ENCODE measurements at regions of chr18 and their contacts with region 1.

Region 1: GRCh38 chr18:51211552-51211951 is 14.1 kb upstream of the MEX3C start:
- DNase-seq: peak; percentile 64 to 65
- ATAC-seq: peak; percentile 86 to 96 (median 96)
- H3K4me3 ChIP-seq: no peak overlapping the region
- H3K4me3 Mint-ChIP-seq: peak overlapping the region; percentile 70
- H3K27ac ChIP-seq: peak overlapping the region; percentile 93
- H3K27ac Mint-ChIP-seq: peak overlapping the region; percentile 81 to 85
- H3K4me1 ChIP-seq: peaks cover 20% of the 10 kb centered on the region
- H3K4me1 Mint-ChIP-seq: peaks cover 41 to 42% of the 10 kb centered on the region in 2 donors
- H3K27me3 ChIP-seq: no peaks in the 10 kb centered on the region
- H3K27me3 Mint-ChIP-seq: no peaks in the 10 kb centered on the region
- CTCF ChIP-seq: no peak

Region 2: DNA sequence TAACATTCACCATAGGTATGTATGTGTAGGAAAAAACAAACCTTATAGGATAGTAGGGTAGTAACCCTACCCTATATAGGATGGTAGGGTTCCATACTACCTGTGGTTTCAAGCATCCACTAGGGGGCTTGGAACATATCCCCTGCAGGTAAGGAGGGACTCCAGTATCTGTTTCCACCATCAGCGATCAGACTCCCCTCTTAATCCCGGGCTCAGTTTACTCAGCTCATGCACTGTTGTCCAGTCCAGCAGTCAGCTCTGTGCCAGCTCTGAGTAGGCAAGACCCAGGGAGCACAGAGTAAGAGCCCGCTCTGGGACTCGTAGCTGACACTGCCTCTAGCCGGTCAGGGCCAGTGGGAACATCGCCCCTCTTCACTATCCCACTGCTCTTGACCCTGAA is 75.8 kb before region 1 on chr18:
- intact Hi-C with region 1: no loop called
- DNase-seq: peak in 1 of 2 donors; percentile 51
- ATAC-seq: peak in 1 of 3 donors; percentile 52
- H3K4me3 ChIP-seq: no peak overlapping the region
- H3K4me3 Mint-ChIP-seq: no peak overlapping the region
- H3K27ac ChIP-seq: no peak overlapping the region
- H3K27ac Mint-ChIP-seq: no peak overlapping the region
- H3K4me1 ChIP-seq: peaks cover 4% of the 10 kb centered on the region
- H3K4me1 Mint-ChIP-seq: peaks cover 13 to 22% of the 10 kb centered on the region in 2 donors
- H3K27me3 ChIP-seq: no peaks in the 10 kb centered on the region
- H3K27me3 Mint-ChIP-seq: no peaks in the 10 kb centered on the region
- CTCF ChIP-seq: peak; percentile 33

Region 3: DNA sequence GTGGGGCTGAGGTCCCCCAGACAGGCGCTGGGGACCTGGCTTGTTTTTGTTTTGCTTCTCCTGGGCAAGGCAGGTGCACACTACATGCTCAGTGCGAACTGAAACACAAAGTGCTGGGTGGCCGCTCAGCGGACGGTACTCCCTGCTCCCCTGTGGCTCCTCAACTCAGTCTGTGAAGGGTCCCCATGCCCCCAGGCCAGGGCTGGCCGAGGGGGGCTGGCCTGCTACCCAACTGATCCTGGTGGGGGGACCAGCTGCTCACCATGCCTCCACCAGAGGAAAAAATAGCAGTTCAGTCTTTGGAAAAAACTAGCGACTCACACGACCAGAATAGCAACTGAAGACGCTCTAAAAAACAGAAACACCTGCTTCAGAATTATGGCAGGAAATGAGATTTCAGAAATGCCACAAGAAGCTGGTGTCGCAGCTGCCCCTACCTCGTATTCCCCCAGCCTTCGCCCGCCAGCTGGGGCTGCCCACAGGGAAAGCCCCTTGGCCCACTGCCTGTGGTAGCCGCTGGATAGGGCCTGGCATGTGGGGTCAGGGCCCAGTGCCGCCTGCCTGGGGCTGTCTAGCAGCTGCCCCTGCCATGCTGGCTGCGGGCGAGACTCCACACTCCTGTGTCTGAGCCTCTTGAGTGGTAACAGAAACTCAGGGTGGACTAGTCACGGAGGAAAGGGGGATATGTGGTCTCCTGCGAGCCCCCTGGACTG is 57.7 kb before region 1 on chr18:
- intact Hi-C with region 1: loop called (anchors 1 kb)
- DNase-seq: peak; percentile 73 to 74
- ATAC-seq: peak; percentile 63 to 80 (median 75)
- H3K4me3 ChIP-seq: peak overlapping the region; percentile 33
- H3K4me3 Mint-ChIP-seq: peak overlapping the region; percentile 81
- H3K27ac ChIP-seq: peak overlapping the region; percentile 92
- H3K27ac Mint-ChIP-seq: peak overlapping the region; percentile 97 to 99
- H3K4me1 ChIP-seq: peaks cover 59% of the 10 kb centered on the region
- H3K4me1 Mint-ChIP-seq: peaks cover 51 to 55% of the 10 kb centered on the region in 2 donors
- H3K27me3 ChIP-seq: no peaks in the 10 kb centered on the region
- H3K27me3 Mint-ChIP-seq: no peaks in the 10 kb centered on the region
- CTCF ChIP-seq: no peak

Region 4: GRCh38 chr18:51197661-51198424 is 13.7 kb before region 1 on chr18 and contains the start of gene MEX3C:
- intact Hi-C with region 1: loop called (anchors 1 kb)
- DNase-seq: peak; percentile 99 to 100
- ATAC-seq: peak; percentile 79 to 93 (median 79)
- H3K4me3 ChIP-seq: peak within 1 kb of the TSS; percentile 76
- H3K4me3 Mint-ChIP-seq: peak within 1 kb of the TSS; percentile 97
- H3K27ac ChIP-seq: peak within 1 kb of the TSS; percentile 91
- H3K27ac Mint-ChIP-seq: peak within 1 kb of the TSS; percentile 93 to 97
- H3K4me1 ChIP-seq: peaks cover 17% of the 10 kb centered on the region
- H3K4me1 Mint-ChIP-seq: peaks cover 61 to 63% of the 10 kb centered on the region in 2 donors
- H3K27me3 ChIP-seq: no peaks in the 10 kb centered on the region
- H3K27me3 Mint-ChIP-seq: no peaks in the 10 kb centered on the region
- CTCF ChIP-seq: no peak
- total RNA-seq, gene MEX3C: 189 to 205 (median 202) TPM

Region 5: DNA sequence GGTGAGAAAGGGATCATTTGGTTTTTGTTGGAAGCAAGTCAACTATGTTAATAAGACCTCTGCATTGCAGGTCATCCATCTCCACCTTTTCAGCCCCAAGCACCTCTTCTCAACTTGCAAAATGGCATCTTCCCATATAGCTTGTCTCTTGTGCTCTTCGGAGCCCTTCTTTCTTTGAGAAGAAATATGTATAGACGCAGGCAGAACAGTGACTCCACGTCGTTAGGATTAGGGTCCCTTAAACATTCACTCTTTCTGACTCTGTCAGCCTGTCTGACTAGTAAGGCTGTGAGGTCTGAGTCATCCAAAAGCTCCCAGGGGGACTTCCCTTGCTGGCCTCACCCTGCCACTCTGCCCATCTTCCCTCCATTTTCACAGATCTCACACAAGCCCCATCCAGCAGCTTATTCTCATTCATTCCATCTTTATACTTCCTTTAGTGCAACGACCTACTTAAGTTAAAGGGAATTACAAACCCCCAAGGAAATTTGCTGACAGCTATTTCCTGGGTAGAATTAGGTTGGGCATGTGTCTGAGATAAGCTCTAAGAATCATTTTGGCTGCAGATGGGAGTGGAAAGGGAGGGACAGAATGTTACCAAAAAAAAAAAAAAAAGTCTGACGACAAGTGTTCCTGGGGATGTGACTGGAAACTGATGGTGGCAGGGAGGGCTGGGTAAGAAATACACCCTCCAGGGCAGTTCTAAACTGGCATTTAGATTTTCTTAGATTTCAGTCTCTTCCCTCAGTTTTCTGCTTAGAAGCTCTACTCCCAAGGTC is 23.6 kb after region 1 on chr18:
- intact Hi-C with region 1: loop called (anchors 2 kb)
- DNase-seq: peak in 1 of 2 donors; percentile 3
- ATAC-seq: peak; percentile 80 to 92 (median 89)
- H3K4me3 ChIP-seq: no peak overlapping the region
- H3K4me3 Mint-ChIP-seq: peak overlapping the region; percentile 0
- H3K27ac ChIP-seq: no peak overlapping the region
- H3K27ac Mint-ChIP-seq: peak overlapping the region; percentile 59 to 77
- H3K4me1 ChIP-seq: peaks cover 6% of the 10 kb centered on the region
- H3K4me1 Mint-ChIP-seq: peaks cover 23% of the 10 kb centered on the region in 2 donors
- H3K27me3 ChIP-seq: no peaks in the 10 kb centered on the region
- H3K27me3 Mint-ChIP-seq: no peaks in the 10 kb centered on the region
- CTCF ChIP-seq: no peak